Activated CD4-positive, alpha-beta T cell treated with anti-CD3 and anti-CD28 coated beads for 36 hours (primary cell): ENCODE measurements at regions of chr13 and their contacts with region 1.

Region 1: DNA sequence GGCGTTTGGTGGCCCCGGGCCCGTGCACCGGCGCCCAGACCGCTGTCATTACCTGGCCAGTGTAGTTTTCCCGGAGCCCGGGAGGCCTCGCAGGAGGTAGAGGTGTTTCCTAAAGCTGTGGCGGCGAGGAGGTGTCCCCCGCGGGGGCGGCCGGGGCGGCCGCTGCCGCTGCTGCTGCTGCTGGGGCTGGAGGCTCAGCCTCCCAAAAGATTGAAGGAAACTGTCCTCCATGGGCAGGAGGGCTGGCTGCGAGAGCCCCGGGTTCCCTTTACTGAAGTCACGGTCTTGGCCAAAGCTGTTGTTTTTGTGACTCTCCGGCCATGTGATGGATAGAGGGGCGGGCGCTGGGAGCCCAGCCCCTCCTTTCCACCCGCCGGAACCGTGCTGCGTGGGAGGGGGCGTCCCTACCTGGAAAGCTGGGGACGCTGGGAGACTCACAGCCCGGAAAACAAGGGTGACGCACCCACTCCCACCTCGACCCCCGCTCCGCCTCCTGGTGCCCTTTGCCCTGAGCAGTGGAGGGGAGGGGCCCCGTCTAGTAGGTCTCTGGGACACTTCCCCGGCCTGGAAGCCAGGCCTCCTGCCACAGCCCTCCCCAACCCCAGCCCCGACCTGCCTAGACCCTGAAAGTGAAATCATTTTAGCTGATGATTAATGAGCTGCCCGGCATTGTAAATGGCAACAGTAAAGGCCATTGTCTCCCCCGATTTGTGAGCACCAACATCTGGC is at the start of gene N4BP2L1:
- DNase-seq: peak; percentile 94
- ATAC-seq: peak; percentile 77
- H3K4me3 Mint-ChIP-seq: peak within 1 kb of the TSS; percentile 86
- H3K27ac Mint-ChIP-seq: peak within 1 kb of the TSS; percentile 94
- H3K4me1 Mint-ChIP-seq: peaks cover 31% of the 10 kb centered on the region
- H3K27me3 Mint-ChIP-seq: no peaks in the 10 kb centered on the region
- total RNA-seq, gene N4BP2L1: 16.1 to 16.5 TPM

Region 2: DNA sequence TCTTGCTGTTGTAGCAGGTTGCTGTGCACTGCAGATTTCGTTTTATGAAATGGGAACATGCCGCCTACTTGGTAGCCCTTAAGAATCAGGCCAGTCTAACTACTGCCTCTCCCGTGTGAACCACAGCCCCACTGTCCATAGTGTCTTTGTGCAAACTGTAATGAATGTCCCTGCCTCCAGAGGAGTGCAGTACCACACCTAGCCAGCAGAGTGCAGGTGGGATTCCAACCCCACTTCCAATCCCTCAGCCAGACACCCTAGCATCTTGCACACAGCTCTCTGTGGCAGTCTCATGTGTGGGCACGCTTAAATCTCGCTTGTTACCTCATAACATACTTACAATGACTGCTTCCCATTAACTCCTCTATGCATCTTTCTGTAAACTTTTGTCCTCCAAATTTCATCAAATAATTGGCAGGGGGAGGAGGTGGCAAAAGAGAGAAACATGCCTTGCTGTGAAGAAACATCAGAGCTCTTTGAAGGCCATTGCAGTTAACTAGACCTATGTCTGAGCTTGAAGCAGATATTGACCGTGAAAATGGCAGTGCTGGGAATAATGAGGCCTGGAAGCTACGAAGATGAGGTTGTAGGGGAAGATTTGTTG is 160.1 kb before region 1 on chr13:
- CTCF ChIA-PET with region 1: no interaction called
- POLR2A ChIA-PET with region 1: no interaction called
- intact Hi-C with region 1: loop called in 1 of 2 experiments (anchors 5 kb)
- DNase-seq: peak; percentile 76
- ATAC-seq: peak; percentile 63
- H3K4me3 Mint-ChIP-seq: no peak overlapping the region
- H3K27ac Mint-ChIP-seq: no peak overlapping the region
- H3K4me1 Mint-ChIP-seq: peaks cover 9% of the 10 kb centered on the region
- H3K27me3 Mint-ChIP-seq: no peaks in the 10 kb centered on the region

Region 3: DNA sequence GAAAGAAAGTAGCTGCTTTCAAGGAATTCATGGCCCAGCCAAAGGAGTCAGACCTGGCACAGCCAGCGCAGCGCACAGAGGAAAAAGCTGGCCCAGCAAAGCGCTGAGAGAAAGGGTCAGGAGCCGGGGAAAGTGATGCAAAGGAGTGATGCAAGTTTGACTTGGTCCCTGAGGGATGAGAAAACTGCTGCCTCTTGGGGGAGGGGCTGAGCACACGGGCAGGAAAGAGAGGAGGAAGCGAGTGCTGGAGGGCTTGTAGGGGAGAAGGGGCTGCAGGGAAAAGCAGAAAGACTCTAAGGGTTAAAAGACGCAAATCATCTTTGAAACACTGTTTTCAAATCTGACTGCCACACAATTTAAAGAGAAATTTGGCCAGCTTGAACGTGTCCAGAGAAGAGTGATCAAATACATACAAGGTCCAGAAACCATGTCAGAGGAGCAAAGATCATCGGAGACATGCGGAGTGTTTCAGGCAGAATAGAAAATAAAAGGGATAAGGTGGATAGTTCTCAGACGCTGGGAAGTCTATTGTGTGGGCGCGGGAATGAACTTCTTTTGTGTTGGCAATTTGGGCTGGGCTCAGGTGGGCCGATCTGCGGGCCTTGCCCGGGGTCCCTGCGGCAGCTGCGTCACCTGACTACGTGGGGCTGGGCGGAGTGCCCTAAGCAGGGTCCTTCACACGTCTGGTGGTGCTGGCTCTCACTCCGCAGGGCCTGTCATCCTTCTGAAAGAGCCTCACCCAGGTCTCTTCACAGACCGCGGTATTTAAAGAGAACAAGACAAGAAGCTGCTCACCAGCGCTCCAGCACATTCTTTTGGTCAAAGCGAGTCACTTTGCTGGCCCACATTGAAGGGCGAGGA is 18.2 kb before region 1 on chr13:
- CTCF ChIA-PET with region 1: interaction called, 5 read pairs
- POLR2A ChIA-PET with region 1: interaction called, 4 read pairs
- intact Hi-C with region 1: loop called (anchors 1 to 2 kb)
- DNase-seq: peak; percentile 8
- ATAC-seq: no peak
- H3K4me3 Mint-ChIP-seq: no peak overlapping the region
- H3K27ac Mint-ChIP-seq: no peak overlapping the region
- H3K4me1 Mint-ChIP-seq: peaks cover 30% of the 10 kb centered on the region
- H3K27me3 Mint-ChIP-seq: no peaks in the 10 kb centered on the region

Region 4: DNA sequence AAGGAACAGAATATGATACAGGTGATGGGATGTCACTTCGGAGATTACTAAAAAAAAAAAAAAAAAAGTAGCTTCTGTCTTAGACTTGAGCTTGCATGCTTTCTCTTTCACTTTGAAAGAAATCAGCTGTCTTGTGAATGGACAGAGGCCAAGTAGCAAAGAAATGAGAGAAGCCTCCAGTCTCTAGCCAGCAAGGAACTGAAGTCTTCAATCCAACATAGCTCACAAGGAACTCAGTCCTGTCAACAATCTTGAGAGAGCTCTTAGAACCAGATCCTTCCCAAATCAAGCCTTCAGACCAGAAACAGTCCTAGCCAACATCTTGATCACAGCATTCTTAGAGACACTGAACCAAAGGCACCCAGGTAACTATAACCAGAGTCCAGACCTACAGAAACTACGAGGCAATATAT is 102.8 kb after region 1 on chr13:
- CTCF ChIA-PET with region 1: no interaction called
- POLR2A ChIA-PET with region 1: no interaction called
- intact Hi-C with region 1: no loop called
- DNase-seq: no peak
- ATAC-seq: peak; percentile 62
- H3K4me3 Mint-ChIP-seq: peak overlapping the region; percentile 66
- H3K27ac Mint-ChIP-seq: peak overlapping the region; percentile 79
- H3K4me1 Mint-ChIP-seq: peaks cover 77% of the 10 kb centered on the region
- H3K27me3 Mint-ChIP-seq: no peaks in the 10 kb centered on the region

Region 5: GRCh38 chr13:32737111-32737571 is 309.1 kb after region 1 on chr13:
- CTCF ChIA-PET with region 1: no interaction called
- POLR2A ChIA-PET with region 1: no interaction called
- intact Hi-C with region 1: loop called in 1 of 2 experiments (anchors 5 kb)
- DNase-seq: no peak
- ATAC-seq: peak; percentile 73
- H3K4me3 Mint-ChIP-seq: peak overlapping the region; percentile 69
- H3K27ac Mint-ChIP-seq: peak overlapping the region; percentile 92
- H3K4me1 Mint-ChIP-seq: peaks cover 27% of the 10 kb centered on the region
- H3K27me3 Mint-ChIP-seq: no peaks in the 10 kb centered on the region